ENCODE measurements at regions of chr9 and their contacts with region 1.

Region 1: GRCh38 chr9:95127249-95128176 is 190.0 kb downstream of the FANCC start:
- DNase-seq: peak; percentile 88
- ATAC-seq: peak; percentile 89 to 92
- H3K4me3 ChIP-seq: peak overlapping the region; percentile 36
- H3K27ac ChIP-seq: no peak overlapping the region
- H3K4me1 ChIP-seq: peaks cover 29% of the 10 kb centered on the region
- H3K27me3 ChIP-seq: no peaks in the 10 kb centered on the region
- CTCF ChIP-seq: peak; percentile 96

Region 2: DNA sequence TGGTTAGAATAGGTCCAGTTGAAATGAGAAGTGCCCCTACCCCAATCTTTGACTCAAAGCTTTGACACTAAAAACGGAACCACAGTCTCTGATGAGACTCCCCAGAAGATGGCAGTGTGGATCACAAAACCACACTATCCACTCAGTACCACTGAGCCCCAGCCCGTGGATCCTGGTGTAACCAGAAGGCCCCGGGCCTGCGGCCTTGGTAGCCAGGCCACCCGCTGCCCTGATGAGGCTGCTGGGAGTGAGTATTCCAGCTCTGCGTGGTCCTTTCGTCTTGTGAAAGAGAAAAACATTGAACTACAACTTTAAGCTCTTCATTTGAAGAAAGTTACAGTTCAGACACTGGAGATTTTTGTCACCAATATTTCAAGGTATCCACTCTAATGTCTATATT is 446.0 kb before region 1 on chr9:
- intact Hi-C with region 1: loop called (anchors 5 kb)
- DNase-seq: peak; percentile 83
- ATAC-seq: peak; percentile 97
- H3K4me3 ChIP-seq: no peak overlapping the region
- H3K27ac ChIP-seq: no peak overlapping the region
- H3K4me1 ChIP-seq: no peaks in the 10 kb centered on the region
- H3K27me3 ChIP-seq: no peaks in the 10 kb centered on the region
- CTCF ChIP-seq: peak; percentile 78

Region 3: GRCh38 chr9:94783102-94783664 is 344.3 kb before region 1 on chr9:
- intact Hi-C with region 1: loop called (anchors 10 kb)
- DNase-seq: peak; percentile 86
- ATAC-seq: peak; percentile 94
- H3K4me3 ChIP-seq: no peak overlapping the region
- H3K27ac ChIP-seq: peak overlapping the region; percentile 32
- H3K4me1 ChIP-seq: peaks cover 12% of the 10 kb centered on the region
- H3K27me3 ChIP-seq: no peaks in the 10 kb centered on the region
- CTCF ChIP-seq: peak; percentile 75

Region 4: GRCh38 chr9:95297316-95297715 is 169.8 kb after region 1 on chr9:
- intact Hi-C with region 1: no loop called
- DNase-seq: no peak
- ATAC-seq: no peak
- H3K4me3 ChIP-seq: no peak overlapping the region
- H3K27ac ChIP-seq: no peak overlapping the region
- H3K4me1 ChIP-seq: no peaks in the 10 kb centered on the region
- H3K27me3 ChIP-seq: no peaks in the 10 kb centered on the region
- CTCF ChIP-seq: no peak

Region 5: DNA sequence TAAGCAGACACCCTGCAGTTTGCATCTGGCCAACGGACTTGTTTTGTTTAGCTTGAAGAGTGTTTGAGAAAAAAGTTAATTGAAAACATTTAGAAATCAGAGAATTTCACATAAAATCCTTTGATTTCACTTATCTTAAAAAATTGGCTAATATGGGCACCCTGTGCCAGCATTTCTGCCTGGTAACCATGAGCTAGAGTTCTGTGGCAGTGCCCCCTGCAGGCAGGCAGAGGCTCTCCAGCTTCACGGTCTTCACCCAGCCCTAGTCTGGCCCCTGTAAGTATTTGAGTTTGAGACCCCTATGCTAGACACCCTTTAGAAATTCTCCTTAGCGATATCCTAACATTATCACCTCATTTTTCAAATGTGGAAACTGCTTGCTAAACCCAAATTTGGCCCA is 208.8 kb after region 1 on chr9:
- intact Hi-C with region 1: no loop called
- DNase-seq: no peak
- ATAC-seq: peak; percentile 68 to 74
- H3K4me3 ChIP-seq: no peak overlapping the region
- H3K27ac ChIP-seq: no peak overlapping the region
- H3K4me1 ChIP-seq: no peaks in the 10 kb centered on the region
- H3K27me3 ChIP-seq: no peaks in the 10 kb centered on the region
- CTCF ChIP-seq: peak; percentile 71